ENCODE measurements at regions of chr1 and their contacts with region 1.

Region 1: DNA sequence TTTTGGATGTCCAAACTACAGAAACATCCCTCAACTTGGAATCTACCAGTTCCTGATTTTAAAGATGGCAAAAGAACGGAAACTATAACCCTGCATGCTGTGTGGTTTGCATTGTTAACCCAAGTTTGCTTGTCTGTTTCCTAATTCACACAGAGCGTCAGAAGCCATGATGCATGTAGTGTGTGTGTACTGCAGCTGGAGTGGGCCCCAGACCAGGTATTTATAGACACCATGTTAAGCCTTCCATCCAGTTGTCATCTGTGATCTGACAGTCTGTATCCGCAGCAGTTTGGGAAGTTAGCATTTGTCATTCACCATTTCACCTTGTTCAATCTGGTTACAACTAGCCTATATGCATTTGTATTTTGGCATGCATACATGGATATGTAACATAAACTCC is 27.7 kb upstream of the PLEKHM2 start:
- DNase-seq: no peak

Region 2: GRCh38 chr1:15736038-15736889 is 79.8 kb after region 1 on chr1 and contains the start of gene SLC25A34:
- intact Hi-C with region 1: loop called (anchors 5 kb)
- DNase-seq: peak; percentile 89
- total RNA-seq, gene SLC25A34: 2.9 TPM

Measured in cardiac septum (tissue), 1 donor.